Caco-2 (cell line): ENCODE measurements at regions of chrX and their contacts with region 1.

Region 1: DNA sequence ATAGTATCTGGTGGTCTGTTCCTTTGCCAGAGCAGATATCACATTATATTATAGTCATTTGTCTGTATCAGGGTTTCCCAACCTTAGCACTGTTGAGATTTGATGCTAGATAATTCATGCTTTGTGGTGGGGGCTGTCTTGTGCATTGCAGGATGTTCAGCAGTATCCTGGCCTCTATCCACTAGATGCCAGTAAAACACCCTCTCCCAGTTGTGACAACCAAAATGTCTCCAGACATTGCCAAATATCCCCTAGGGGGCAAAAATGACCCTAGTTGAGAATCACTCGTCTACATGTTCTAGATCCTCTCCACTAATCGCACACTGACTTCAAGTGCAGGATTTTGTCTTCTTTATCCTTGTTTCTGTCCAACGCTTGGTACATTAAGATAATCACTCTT is 160.8 kb downstream of the FANCB start:
- DNase-seq: no peak
- H3K4me3 ChIP-seq: no peak overlapping the region
- H3K4me3 Mint-ChIP-seq: no peak overlapping the region
- H3K27ac Mint-ChIP-seq: no peak overlapping the region
- H3K4me1 ChIP-seq: no peaks in the 10 kb centered on the region
- H3K4me1 Mint-ChIP-seq: no peaks in the 10 kb centered on the region
- H3K27me3 ChIP-seq: no peaks in the 10 kb centered on the region
- H3K27me3 Mint-ChIP-seq: no peaks in the 10 kb centered on the region
- CTCF ChIP-seq: no peak

Region 2: DNA sequence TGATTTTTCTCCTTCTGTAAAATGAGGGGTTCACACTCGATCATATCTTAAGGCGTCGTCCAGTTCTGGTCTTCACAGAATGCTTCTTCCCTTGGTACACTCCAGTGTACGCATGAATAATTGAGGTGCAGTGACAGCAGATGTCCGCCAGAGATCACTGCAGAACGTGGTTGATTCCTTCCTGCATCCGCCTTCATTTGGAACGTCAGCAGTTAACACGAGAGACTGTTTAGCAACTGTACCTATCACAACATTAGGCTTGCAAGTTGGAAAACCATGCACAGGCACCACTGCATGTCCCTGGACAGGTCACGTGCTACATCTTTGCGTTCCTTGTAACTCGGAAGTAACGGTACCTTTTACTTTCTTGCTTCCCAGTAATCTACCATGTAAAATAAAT is 616.4 kb before region 1 on chrX:
- CTCF ChIA-PET with region 1: no interaction called
- POLR2A ChIA-PET with region 1: no interaction called
- intact Hi-C with region 1: loop called (anchors 10 kb)
- DNase-seq: peak; percentile 30 to 38
- H3K4me3 ChIP-seq: no peak overlapping the region
- H3K4me3 Mint-ChIP-seq: no peak overlapping the region
- H3K27ac Mint-ChIP-seq: no peak overlapping the region
- H3K4me1 ChIP-seq: no peaks in the 10 kb centered on the region
- H3K4me1 Mint-ChIP-seq: no peaks in the 10 kb centered on the region
- H3K27me3 ChIP-seq: no peaks in the 10 kb centered on the region
- H3K27me3 Mint-ChIP-seq: no peaks in the 10 kb centered on the region
- CTCF ChIP-seq: peak in 1 of 2 experiments; percentile 44